ENCODE measurements at regions of chr6 and their contacts with region 1.

Region 1: DNA sequence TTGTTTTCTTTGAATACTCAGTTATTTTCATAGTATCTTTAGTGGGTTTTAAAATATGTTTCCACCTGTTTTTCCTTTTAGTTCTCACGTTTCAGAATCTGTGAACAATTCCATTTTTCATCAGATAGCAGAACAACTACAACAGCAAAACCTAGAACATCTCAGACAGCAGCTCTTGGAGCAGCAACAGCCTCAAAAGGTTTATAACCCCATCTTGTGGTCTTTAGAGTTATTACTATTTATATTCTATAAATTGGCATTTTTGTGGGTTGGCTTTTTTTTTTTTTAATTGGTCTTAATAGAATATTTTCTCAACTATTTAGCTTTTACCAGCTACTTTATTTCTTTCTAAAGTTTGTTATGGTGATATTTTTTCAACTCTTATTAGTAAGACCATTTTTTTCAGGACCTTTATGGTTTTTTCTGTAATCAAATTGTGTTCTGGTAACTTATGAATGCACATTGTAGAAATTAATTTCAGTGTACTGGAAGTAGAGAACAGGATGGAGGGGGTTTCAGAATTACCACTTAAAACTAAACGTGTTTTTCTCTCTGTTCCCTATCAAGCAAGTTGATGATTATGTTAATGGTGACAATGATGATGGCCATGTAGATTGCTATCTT is 72.2 kb downstream of the SCAF8 start:
- DNase-seq: no peak
- H3K4me3 ChIP-seq: no peak overlapping the region
- H3K27ac ChIP-seq: no peak overlapping the region
- H3K4me1 ChIP-seq: peaks cover 3% of the 10 kb centered on the region
- H3K27me3 ChIP-seq: no peaks in the 10 kb centered on the region
- CTCF ChIP-seq: peak; percentile 63

Region 2: DNA sequence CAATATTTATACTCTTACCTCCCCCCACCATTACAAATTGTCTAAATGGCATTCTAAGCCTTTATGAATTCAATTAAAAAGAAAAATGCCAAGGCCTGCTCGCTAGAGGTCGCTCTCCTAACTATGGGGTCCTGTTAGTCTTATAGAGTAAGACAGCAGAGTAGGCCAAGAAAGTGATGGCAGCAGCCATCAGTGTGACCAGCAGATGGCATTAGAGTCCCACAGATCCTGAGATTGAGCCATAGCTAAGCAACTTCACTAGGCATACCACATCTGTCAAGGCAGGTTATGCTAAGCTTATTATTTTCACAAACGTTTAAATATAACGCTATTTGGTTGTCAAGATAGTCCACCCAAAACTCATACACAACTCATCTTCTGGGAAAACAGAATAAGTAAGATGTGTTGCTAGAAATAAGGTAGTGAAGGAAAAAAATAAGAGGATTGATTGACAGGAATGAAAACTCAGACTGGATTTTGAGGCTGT is 129.8 kb before region 1 on chr6:
- intact Hi-C with region 1: loop called (anchors 2 kb)
- DNase-seq: peak; percentile 77
- H3K4me3 ChIP-seq: no peak overlapping the region
- H3K27ac ChIP-seq: no peak overlapping the region
- H3K4me1 ChIP-seq: no peaks in the 10 kb centered on the region
- H3K27me3 ChIP-seq: no peaks in the 10 kb centered on the region
- CTCF ChIP-seq: peak; percentile 100

Measured in left ventricle myocardium inferior (tissue), 1 donor.